H1 (cell line): ENCODE measurements at regions of chr12 and their contacts with region 1.

Region 1: GRCh38 chr12:52980693-52981423 is 25.4 kb upstream of the EIF4B start:
- DNase-seq: peak; percentile 84 to 88
- H3K4me3 ChIP-seq: no peak overlapping the region
- H3K27ac ChIP-seq: no peak overlapping the region
- H3K4me1 ChIP-seq: peaks cover 0 to 10% (median 0%) of the 10 kb centered on the region in 4 experiments; a peak in 1 of 7 replicates
- H3K27me3 ChIP-seq: no peaks in the 10 kb centered on the region
- CTCF ChIP-seq: peak; percentile 92 to 100 (median 100)
- EP300 ChIP-seq: no peak
- POLR2A ChIP-seq: no peak
- RAD21 ChIP-seq: peak; percentile 100

Region 2: DNA sequence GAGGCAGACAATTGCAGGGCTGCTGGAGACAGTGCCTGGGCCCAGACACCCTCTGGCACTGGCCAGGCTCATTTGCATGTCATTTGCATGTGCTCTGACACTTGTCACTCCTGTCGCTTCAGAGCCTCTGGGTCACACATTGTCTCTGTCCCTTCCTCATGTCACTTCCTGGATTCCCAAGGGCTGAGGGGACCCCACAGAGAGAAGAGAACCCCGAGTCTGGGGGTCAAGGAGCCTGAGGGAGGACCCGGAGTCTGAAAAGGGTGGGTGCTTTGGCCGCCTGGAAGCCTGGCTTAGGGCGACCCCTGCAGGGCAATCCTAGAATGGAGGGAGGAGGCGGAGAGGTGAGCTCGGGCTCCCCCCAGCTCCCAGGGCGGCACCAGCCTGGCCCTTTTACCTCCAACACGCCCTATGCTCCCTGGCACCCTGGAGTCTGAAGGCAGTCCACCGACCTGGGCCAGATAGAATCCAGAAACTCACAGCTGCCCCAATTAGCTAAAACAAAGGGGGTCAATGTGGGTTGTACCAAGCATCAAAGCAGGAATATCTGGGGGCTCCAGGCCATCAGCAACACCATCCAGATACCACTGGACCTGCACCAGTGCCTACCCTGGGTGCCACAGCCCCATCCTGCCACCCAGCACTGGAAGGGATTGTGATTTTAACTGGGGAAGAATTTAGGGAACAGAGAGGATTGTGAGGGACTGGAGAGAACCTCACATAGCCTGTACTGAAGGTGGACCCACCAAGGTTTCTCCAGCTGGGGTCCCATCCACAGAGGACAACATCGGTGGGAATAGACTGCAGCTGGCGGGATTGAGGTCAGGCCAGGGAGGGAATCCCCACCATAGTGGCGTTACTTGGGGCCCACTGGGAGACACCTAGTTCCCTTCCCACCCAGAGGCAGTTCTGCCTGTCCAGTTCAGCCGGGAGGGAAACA is 110.2 kb before region 1 on chr12:
- CTCF ChIA-PET with region 1: interaction called, 1,250 read pairs
- POLR2A ChIA-PET with region 1: no interaction called
- DNase-seq: peak in 1 of 2 experiments; percentile 98
- H3K4me3 ChIP-seq: no peak overlapping the region
- H3K27ac ChIP-seq: no peak overlapping the region
- H3K4me1 ChIP-seq: no peaks in the 10 kb centered on the region; a peak in 4 of 7 replicates
- H3K27me3 ChIP-seq: peaks cover 0 to 22% (median 12%) of the 10 kb centered on the region in 4 experiments; a peak in 5 of 7 replicates
- CTCF ChIP-seq: peak; percentile 86 to 98 (median 90)
- EP300 ChIP-seq: no peak
- POLR2A ChIP-seq: no peak
- RAD21 ChIP-seq: peak; percentile 96 to 98

Region 3: DNA sequence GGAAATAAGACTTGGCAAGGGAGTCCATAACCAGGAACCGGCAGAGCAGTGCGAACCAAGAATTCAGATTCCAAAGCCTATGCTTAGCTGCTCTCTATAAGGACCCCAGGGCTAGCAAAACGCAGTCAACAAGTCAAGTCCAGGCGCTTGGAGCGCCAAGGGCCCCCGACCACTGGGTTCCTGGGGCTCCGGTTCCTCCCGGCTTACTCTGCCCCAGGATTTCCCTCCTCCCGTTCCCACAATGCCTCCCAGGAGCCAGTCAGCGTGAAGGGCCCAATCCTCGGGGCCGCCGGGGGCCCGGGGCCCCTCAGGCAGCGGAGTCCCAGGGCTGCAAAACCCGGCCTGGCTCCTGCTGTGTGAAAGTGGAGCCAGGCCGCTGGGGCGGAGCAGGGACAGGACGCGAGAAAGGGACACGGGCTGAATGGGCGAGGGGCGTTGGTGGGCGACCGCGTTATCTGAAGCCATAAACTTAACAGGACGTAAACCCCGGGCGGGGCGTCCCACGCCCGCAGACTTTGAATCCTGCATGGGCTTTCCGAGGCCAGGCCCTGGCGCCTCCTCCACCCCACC is 77.5 kb before region 1 on chr12:
- CTCF ChIA-PET with region 1: interaction called, 1,250 read pairs
- POLR2A ChIA-PET with region 1: interaction called, 47 read pairs
- DNase-seq: peak; percentile 61 to 91
- H3K4me3 ChIP-seq: peak overlapping the region; percentile 59 to 100 (median 76)
- H3K27ac ChIP-seq: no peak overlapping the region
- H3K4me1 ChIP-seq: peaks cover 14 to 21% (median 15%) of the 10 kb centered on the region in 4 experiments
- H3K27me3 ChIP-seq: no peaks in the 10 kb centered on the region; a peak in 1 of 7 replicates
- CTCF ChIP-seq: no peak
- EP300 ChIP-seq: peak in 1 of 2 experiments; percentile 53; a peak in 1 of 3 replicates
- POLR2A ChIP-seq: no peak; a peak in 1 of 3 replicates
- RAD21 ChIP-seq: peak in 1 of 2 experiments; percentile 5; a peak in 1 of 4 replicates

Region 4: DNA sequence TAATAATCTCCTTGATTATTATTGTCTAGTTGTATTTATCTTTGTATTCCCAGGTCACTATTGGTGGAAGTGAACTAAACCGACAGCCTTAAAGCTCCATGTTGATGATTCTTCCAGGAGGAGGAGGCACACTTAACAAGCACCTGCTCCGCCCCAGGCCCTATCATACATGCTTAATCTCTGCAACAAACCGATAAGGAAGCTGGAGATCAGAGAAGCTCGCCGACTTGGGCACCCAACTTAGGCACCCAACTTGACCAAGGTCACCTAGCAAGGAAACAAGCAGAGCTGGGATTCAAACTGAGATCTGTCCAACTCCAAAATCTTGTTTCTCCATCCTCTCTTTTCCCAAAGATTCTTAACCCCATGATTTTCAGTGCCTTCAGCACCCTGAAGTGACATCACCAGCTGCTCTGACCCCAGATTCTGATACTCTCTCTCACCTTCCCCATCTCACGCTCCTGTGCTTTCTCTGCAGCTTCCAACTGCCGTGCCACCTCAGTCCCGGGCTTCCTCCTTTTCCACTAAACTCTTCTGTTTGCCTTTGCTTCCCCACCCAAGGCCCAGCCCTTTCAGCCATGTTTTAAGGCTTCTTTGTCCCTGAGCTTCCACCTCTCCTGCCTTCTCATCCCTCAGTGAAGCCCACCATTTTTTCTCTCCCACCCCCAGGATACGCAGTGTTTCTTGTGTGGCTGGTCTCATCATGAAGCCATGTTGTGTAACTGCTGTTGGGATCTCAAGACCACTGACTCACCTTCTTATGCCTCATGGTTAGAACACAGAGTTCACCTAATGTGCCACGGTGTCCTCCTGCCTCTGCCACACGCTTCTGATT is 38.6 kb before region 1 on chr12:
- CTCF ChIA-PET with region 1: interaction called, 25 read pairs
- POLR2A ChIA-PET with region 1: interaction called, 3 read pairs
- DNase-seq: no peak
- H3K4me3 ChIP-seq: no peak overlapping the region
- H3K27ac ChIP-seq: no peak overlapping the region
- H3K4me1 ChIP-seq: peaks cover 12 to 30% (median 23%) of the 10 kb centered on the region in 4 experiments
- H3K27me3 ChIP-seq: no peaks in the 10 kb centered on the region
- CTCF ChIP-seq: no peak
- EP300 ChIP-seq: no peak
- POLR2A ChIP-seq: no peak
- RAD21 ChIP-seq: no peak

Region 5: GRCh38 chr12:52956987-52957386 is 23.9 kb before region 1 on chr12:
- CTCF ChIA-PET with region 1: interaction called, 84 read pairs
- POLR2A ChIA-PET with region 1: interaction called, 3 read pairs
- DNase-seq: no peak
- H3K4me3 ChIP-seq: no peak overlapping the region
- H3K27ac ChIP-seq: no peak overlapping the region
- H3K4me1 ChIP-seq: no peaks in the 10 kb centered on the region; a peak in 1 of 7 replicates
- H3K27me3 ChIP-seq: no peaks in the 10 kb centered on the region
- CTCF ChIP-seq: no peak
- EP300 ChIP-seq: no peak
- POLR2A ChIP-seq: no peak
- RAD21 ChIP-seq: no peak

Region 6: GRCh38 chr12:52992699-52993557 is 12.1 kb after region 1 on chr12:
- CTCF ChIA-PET with region 1: interaction called, 18 read pairs
- POLR2A ChIA-PET with region 1: interaction called, 4 read pairs
- DNase-seq: no peak
- H3K4me3 ChIP-seq: no peak overlapping the region
- H3K27ac ChIP-seq: no peak overlapping the region
- H3K4me1 ChIP-seq: peaks cover 0 to 4% (median 0%) of the 10 kb centered on the region in 4 experiments; a peak in 1 of 7 replicates
- H3K27me3 ChIP-seq: no peaks in the 10 kb centered on the region
- CTCF ChIP-seq: no peak
- EP300 ChIP-seq: no peak
- POLR2A ChIP-seq: no peak
- RAD21 ChIP-seq: no peak

Region 7: DNA sequence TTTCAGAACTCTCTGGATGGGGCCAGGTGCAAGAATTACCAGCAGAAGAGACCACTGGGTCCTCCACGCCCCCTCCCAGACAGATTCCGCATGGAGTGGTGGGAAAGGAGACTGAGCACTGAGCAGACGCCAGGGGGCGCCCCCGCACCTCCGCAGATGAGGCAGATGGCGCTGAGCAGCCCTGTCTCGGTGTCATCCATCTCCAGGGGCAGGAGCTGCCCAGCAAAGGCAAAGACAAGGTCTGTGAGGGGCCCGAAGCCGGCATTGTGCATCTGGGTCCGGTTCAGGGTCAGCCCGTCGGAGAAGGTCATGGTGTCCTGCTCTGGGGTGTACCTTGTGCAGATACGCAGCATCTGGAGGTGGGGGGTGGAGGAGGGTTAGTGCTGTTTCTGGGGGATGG is 232.5 kb after region 1 on chr12:
- CTCF ChIA-PET with region 1: no interaction called
- POLR2A ChIA-PET with region 1: no interaction called
- DNase-seq: peak in 1 of 2 experiments; percentile 96
- H3K4me3 ChIP-seq: no peak overlapping the region
- H3K27ac ChIP-seq: no peak overlapping the region
- H3K4me1 ChIP-seq: peaks cover 21 to 45% (median 35%) of the 10 kb centered on the region in 4 experiments
- H3K27me3 ChIP-seq: no peaks in the 10 kb centered on the region
- CTCF ChIP-seq: peak in 2 of 3 experiments; percentile 96 to 97; a peak in 3 of 4 replicates
- EP300 ChIP-seq: no peak
- POLR2A ChIP-seq: no peak
- RAD21 ChIP-seq: peak; percentile 98